Activated naive CD4-positive, alpha-beta T cell treated with anti-CD3 and anti-CD28 coated beads for 36 hours (primary cell): ENCODE measurements at regions of chr5 and their contacts with region 1.

Region 1: DNA sequence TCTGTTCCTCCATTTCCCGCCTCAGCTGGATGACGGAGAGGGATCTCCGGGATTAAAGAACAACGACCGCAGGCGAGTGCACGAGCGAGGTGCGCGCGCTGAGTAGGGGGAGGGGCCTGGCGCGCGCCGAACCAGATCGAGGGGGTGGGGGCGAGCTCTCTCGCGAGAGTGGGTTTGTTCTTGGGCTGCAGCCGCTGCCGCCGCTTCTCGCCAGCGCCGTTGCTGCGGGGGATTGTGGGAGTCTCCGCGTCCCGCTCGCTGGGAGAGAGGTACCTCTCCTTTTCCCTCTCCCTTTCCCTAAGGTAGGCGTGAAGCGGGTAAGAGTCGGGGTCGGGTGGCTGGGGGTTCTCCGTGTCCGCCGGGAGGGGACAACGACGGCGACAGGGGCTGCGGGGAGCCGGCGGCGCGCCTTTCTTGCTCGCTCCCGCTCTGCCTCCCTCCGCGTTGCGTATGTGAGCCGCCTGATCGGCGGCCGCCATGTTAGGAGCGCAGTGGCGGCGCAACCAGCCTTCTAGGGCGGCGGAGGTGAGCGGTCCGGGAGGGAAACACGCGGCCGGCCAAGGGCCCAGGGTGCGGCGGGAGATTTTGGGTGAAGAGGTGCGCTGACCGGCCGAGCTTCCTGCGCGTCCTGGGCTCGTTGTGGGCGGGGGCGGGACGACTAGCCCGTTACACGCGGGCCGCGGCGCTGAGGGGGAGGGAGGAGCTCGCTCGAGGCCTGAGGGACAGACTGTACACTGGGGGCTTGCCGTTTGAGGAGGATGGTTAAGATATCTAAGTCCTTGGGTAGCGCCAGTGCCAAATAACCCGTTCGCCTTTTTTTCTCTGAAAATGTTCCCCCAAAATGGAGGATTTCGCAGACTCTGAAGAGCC is at the start of gene MATR3:
- DNase-seq: peak; percentile 96
- H3K4me3 Mint-ChIP-seq: peak within 1 kb of the TSS; percentile 89
- H3K27ac Mint-ChIP-seq: peak within 1 kb of the TSS; percentile 97
- H3K4me1 Mint-ChIP-seq: peaks cover 37% of the 10 kb centered on the region
- H3K27me3 Mint-ChIP-seq: no peaks in the 10 kb centered on the region
- total RNA-seq, gene MATR3: 137 to 164 TPM

Region 2: DNA sequence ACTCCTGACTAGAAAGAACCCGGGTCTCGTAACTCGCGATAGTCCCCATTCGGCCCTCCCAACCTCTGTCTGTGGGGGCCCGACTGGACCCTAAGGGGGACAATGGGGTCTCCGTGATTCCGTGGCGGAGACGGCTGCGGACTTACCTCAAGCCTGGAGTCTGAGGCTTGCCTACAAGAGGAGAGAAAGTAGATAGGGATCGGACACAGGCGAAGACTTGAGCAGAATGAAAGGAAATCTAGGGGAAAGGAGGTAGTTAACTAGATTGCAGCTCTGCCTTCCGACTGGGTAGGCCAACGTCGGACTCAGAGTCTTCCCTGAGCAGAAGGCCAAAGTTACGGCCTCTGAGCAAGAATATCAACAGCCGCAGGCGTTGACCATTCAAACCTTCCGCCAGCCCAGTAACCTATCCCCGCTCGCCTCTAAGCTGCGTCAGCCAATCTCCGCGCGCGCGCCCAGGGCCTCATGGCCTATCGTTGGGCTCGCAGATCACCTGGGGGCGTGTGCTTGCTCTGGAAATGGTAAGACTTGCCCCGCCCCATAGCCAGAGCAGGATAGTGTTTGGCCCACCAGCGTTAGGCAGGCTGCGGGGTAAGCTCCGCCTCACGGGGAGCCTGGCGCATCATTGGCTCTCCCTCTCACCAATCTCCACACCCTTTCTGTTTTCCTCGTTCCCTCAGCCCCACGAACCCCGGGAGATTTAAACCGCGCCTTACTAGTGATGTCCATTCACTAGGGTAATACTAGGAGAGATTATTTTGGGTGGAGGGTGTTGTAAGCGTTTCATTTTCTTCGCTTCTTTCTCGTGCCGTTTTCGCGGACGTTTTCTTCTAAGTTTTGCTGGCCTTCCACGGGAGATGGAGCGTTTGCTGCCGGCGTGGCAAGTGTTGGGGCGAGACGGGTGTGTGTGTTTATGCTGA is 962.0 kb before region 1 on chr5 and contains the start of gene CDC25C:
- CTCF ChIA-PET with region 1: no interaction called
- intact Hi-C with region 1: loop called (anchors 10 kb)
- DNase-seq: peak; percentile 99
- H3K4me3 Mint-ChIP-seq: peak within 1 kb of the TSS; percentile 81
- H3K27ac Mint-ChIP-seq: peak within 1 kb of the TSS; percentile 83
- H3K4me1 Mint-ChIP-seq: peaks cover 9% of the 10 kb centered on the region
- H3K27me3 Mint-ChIP-seq: no peaks in the 10 kb centered on the region
- total RNA-seq, gene CDC25C: 23.2 to 26.6 TPM

Region 3: DNA sequence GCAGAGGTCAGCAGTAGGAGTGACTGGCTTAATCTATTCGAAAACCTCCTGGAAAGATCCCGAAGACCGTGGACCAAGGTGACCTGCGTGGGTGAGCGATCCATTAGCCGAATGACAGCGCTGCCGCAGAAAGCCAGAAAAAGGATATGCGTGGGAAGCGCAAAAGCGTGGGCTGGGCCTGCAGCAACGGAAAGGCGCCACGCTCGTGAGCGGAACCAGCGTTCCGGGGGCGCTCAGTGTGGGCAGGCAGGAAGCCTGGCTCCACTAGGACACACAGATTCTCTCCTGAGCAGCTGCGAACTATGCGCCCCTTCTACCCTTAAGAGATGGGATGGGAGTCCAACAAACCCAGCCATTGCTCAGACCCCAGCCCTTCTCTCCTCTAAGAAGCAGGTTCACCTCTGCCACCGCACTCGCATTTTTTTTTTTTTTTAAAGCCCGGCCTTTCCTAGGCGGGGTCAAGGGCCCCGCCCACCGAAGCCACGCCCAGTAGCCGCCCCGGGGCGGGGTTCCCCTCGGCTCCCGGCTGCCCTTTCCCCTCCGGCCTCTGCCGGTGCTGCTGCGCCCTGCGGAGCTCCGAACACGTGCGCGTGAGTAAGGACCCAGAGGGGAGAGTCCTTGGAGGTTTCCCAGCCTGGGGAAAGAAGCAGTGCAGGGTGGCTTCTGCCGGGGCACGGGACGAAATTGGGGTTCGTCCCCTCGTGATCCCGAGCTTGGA is 20.0 kb before region 1 on chr5:
- CTCF ChIA-PET with region 1: interaction called, 6 read pairs
- intact Hi-C with region 1: loop called (anchors 1 kb)
- DNase-seq: peak; percentile 91
- H3K4me3 Mint-ChIP-seq: peak overlapping the region; percentile 93
- H3K27ac Mint-ChIP-seq: peak overlapping the region; percentile 80
- H3K4me1 Mint-ChIP-seq: peaks cover 50% of the 10 kb centered on the region
- H3K27me3 Mint-ChIP-seq: no peaks in the 10 kb centered on the region

Region 4: DNA sequence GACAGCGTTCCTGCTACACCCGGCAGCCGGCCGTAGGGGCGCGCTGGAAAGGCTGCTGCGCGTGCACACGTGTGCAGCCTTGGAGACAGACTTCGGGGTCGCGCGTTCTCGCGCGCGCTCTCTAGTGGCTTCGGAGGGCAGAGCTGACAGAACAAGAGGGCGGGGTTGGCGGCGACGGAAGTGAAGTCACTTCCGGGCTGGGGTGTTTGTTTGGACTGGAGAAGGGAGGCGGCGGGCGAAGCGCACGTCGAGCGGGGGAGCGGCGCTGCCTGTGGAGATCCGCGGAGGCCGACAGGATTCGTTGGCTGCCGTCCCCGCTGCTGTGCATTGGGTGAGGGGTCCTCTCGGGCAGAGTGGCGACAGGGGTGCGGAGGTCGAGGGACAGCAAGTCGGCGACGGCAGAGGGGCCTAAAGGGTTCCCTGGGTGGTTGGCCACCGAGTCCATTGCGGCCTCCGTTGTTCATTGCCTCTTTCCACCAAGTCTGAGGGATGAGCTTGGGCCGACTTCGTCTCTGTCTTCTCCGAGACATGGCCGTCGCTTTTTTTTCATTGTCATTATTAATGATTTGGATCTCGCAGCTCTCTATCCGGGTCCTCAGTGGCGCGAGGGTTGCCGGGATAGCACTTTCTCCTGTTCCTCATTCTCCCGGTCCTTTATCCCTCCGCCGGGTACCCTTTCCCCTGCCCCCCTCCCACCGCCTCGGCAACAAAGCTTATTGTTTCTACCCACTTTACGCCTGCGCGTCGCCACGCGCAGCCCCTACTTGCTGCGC is 48.1 kb after region 1 on chr5 and contains the start of gene PAIP2:
- CTCF ChIA-PET with region 1: interaction called, 4 read pairs
- intact Hi-C with region 1: loop called (anchors 1 kb)
- DNase-seq: peak; percentile 99
- H3K4me3 Mint-ChIP-seq: peak within 1 kb of the TSS; percentile 100
- H3K27ac Mint-ChIP-seq: peak within 1 kb of the TSS; percentile 99
- H3K4me1 Mint-ChIP-seq: peaks cover 48% of the 10 kb centered on the region
- H3K27me3 Mint-ChIP-seq: no peaks in the 10 kb centered on the region
- total RNA-seq, gene PAIP2: 68.8 to 74.3 TPM

Region 5: DNA sequence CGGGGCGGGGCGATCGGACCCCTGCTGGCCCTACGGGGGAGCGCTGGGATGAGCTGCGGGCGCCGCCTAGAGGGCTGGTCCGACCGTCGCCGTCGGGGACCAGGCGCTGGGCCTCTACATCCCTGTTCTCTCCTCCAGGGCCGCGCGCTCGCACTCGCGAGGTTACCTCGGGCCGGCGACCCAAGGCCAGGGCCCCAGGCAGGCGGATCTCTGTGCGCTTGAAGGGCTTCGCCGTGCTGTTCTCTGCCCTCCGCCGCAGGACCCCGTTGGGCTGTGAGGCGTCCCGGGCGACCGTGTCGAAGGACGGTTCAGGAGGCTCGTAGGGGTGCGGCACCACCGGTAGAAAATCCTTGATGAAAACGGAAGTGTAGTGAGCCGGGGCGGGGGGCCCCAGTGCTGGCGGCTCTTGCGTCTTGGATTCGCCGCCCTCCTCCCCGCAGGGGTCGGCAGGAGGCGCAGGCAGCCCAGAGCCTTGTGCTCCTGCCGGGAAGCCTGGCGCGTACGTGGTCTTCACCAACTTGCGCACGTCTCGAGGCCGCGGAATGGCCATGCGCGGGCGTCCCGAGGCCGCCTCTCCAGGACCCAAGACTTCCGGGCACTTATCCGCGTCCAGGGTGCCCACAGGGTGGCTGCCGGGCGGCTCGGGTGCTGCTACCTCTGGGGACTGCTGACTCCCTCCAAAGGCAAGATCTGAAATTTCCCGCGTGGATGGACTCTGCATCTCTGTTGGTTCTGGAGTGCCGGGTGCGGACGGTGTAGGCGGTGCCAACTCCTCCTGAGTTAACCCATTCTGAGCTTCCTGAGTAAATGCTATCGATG is 99.1 kb after region 1 on chr5:
- CTCF ChIA-PET with region 1: no interaction called
- intact Hi-C with region 1: loop called (anchors 1 kb)
- DNase-seq: peak; percentile 86
- H3K4me3 Mint-ChIP-seq: peak overlapping the region; percentile 89
- H3K27ac Mint-ChIP-seq: peak overlapping the region; percentile 78
- H3K4me1 Mint-ChIP-seq: peaks cover 39% of the 10 kb centered on the region
- H3K27me3 Mint-ChIP-seq: no peaks in the 10 kb centered on the region

Region 6: DNA sequence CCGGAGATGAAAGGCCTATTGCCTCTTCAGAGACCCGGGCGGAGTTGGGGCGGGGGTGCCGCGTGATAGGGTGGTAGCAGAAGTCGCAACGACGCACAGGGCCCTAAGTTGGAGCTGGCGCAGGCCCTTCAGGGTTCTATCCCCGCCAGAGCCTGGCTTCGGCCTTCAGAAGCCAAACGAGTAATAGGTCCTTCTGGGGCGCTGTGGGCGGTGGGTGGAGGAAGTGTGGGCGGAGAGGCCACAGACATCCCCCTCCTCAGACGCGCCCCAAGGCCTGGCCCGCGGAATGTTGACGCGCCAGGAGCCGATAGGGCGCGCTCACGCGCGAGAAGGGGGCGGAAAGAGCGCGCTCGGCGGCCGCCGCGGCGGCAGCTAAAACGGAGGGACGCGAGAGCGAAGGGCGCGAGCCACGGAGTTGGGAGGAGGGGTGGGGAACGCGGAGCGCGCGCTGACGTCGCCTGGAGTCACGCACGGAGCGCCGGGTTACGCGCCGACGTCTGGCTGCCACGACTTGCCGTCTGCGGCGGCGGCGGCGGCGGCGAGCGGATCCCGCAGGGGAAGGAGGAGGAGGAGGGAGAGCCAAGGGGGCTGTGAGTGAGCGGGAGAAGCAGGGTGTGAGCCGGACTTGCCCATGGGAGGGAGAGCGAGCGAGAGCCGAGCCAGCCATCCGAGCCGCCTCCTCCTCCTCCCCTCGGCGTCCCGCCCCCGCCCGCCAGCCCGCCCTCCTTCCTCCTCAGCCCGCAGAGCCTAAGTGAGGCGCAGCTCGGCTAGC is 813.8 kb after region 1 on chr5:
- CTCF ChIA-PET with region 1: no interaction called
- intact Hi-C with region 1: loop called (anchors 5 kb)
- DNase-seq: peak; percentile 91
- H3K4me3 Mint-ChIP-seq: peak overlapping the region; percentile 98
- H3K27ac Mint-ChIP-seq: peak overlapping the region; percentile 91
- H3K4me1 Mint-ChIP-seq: peaks cover 39% of the 10 kb centered on the region
- H3K27me3 Mint-ChIP-seq: no peaks in the 10 kb centered on the region

Region 7: DNA sequence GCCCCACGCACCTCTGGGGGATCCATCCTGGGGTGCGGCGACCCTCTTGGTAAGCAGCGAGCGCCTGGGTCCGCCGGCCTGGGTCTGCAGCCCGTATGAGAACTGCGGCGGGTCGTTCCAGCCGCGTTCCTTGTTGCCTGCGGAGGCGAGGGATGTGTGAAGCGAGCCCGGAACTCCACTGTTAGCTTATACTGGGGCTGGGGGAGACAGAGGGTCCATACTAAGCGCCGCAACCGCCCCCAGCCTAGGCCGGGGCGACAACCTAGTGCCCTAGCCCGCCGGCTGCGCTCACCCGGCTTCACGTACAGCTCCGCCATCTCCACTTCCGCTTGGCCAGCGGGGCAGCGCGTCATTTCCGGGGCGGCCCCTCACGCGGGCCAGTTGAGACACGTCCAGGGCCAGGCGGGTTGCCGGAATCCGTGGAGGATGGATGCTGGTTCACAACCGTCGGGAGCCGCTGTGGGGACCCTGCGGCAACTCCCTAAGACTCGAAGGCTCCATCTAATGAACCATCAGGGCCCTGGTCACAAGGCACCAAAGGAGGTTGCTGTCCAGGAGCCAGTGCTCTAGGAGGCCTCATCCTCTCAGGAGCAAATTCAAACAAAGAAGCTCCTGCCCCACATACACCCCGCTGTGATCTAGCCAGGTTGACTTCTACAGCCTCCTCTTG is 1263.5 kb after region 1 on chr5 and contains the start of gene SRA1:
- CTCF ChIA-PET with region 1: no interaction called
- intact Hi-C with region 1: loop called (anchors 10 kb)
- DNase-seq: peak; percentile 92
- H3K4me3 Mint-ChIP-seq: peak within 1 kb of the TSS; percentile 79
- H3K27ac Mint-ChIP-seq: peak within 1 kb of the TSS; percentile 93
- H3K4me1 Mint-ChIP-seq: peaks cover 46% of the 10 kb centered on the region
- H3K27me3 Mint-ChIP-seq: no peaks in the 10 kb centered on the region
- total RNA-seq, gene SRA1: 38.0 to 39.6 TPM